ENCODE measurements at regions of chr5 and their contacts with region 1.

Region 1: DNA sequence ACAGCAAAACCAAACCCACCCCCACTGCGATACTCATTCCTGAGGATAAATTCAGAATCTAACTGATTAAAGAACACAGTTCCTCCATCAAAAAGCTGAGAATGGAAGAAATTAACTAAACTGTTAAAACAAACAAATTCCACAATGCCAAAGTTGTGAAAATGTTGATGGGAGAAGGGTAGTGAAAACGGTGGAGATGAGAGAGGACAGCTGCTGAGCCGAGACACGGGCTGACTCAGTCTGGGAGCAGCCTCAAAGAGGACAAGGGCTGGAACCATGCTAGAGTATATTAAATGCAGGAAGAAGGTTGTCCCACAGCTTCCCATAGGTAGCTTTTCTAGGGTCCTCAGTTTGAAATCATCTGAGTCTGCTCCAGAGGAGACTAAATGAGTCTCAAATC is 14.3 kb downstream of the ADAMTS12 start:
- DNase-seq: peak in 1 of 2 experiments; percentile 33
- H3K4me3 ChIP-seq: no peak overlapping the region
- H3K27ac ChIP-seq: no peak overlapping the region
- H3K4me1 ChIP-seq: no peaks in the 10 kb centered on the region
- H3K27me3 ChIP-seq: no peaks in the 10 kb centered on the region
- CTCF ChIP-seq: no peak

Region 2: DNA sequence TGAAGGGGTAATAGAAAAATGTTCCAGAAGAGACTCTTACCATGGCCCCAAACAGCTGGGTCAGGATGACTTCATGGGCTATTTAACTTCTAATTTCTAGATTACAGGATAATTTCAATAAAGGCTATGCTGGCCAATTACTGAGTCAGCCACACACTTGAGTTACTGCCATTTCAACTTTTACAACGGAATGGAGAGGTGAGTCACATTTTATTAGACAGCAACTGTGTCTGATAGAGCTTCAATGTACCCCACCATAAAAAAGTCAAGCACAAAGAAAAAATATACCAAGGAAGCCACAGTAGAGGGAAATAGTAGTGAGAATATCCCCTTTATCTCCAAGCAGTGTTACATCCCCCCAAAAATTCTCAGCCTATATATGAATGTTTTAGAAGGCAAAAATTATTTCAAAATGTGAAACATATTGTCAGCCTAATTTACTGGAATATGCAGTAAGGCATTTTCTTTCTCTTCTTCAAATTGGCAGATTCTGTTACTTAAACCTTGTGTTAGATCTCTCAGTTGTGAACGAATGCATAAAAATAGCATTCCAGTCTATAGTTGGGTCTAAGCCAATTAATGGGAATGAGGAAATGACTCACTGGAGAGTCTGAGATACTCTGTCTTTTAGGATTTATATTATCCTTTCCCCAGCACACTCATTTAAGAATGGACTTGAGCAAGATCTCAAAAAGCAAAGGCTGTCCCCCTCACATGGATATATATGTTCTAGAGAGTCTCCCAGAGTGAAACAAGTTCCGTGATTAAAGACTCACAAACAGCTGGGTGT is 731.6 kb after region 1 on chr5:
- CTCF ChIA-PET with region 1: no interaction called
- POLR2A ChIA-PET with region 1: interaction called, 37 read pairs
- intact Hi-C with region 1: no loop called
- DNase-seq: peak; percentile 43 to 94
- H3K4me3 ChIP-seq: peak overlapping the region; percentile 12; the same call in 1 of the 2 replicates
- H3K27ac ChIP-seq: peak overlapping the region; percentile 82
- H3K4me1 ChIP-seq: peaks cover 39% of the 10 kb centered on the region
- H3K27me3 ChIP-seq: no peaks in the 10 kb centered on the region
- CTCF ChIP-seq: no peak